ENCODE measurements at regions of chr2 and their contacts with region 1.

Region 1: DNA sequence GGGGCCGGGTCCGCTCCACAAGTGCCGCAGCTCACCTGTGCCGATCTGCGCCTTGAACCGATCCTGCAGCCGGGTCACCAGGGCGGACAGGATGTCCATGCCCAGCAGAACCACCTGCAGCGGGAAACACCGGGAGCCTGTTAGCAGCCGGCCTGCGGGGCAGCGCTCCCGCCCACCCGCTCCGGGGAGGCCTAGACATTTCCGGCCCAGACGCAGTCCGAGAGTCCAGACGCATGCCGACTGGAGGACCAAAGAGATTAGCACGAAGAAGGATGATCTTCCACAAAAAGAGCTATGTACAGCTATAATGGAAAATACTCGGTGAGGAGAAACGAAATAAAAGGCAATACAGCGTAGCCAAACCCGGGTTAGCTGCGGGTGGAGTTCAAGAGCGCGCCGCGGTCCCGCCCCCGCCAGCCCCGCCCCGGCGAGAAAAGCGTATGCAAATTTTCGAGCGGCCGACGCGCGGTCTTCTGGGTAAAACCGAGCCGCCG is 421 bp upstream of the RNU4ATAC start:
- DNase-seq: no peak
- ATAC-seq: peak; percentile 71
- H3K4me3 Mint-ChIP-seq: peak overlapping the region; percentile 82
- H3K27ac Mint-ChIP-seq: peak overlapping the region; percentile 96
- H3K4me1 Mint-ChIP-seq: peaks cover 54% of the 10 kb centered on the region
- H3K27me3 Mint-ChIP-seq: no peaks in the 10 kb centered on the region

Region 2: GRCh38 chr2:121505005-121505404 is 25.3 kb before region 1 on chr2:
- CTCF ChIA-PET with region 1: no interaction called
- DNase-seq: no peak
- ATAC-seq: no peak
- H3K4me3 Mint-ChIP-seq: no peak overlapping the region
- H3K27ac Mint-ChIP-seq: no peak overlapping the region
- H3K4me1 Mint-ChIP-seq: peaks cover 15% of the 10 kb centered on the region
- H3K27me3 Mint-ChIP-seq: no peaks in the 10 kb centered on the region

Region 3: GRCh38 chr2:121699421-121700333 is 169.4 kb after region 1 on chr2:
- CTCF ChIA-PET with region 1: interaction called, 26 read pairs
- DNase-seq: peak; percentile 98
- ATAC-seq: peak; percentile 94
- H3K4me3 Mint-ChIP-seq: peak overlapping the region; percentile 75
- H3K27ac Mint-ChIP-seq: peak overlapping the region; percentile 99
- H3K4me1 Mint-ChIP-seq: peaks cover 56% of the 10 kb centered on the region
- H3K27me3 Mint-ChIP-seq: no peaks in the 10 kb centered on the region

Region 4: GRCh38 chr2:121722479-121722878 is 192.2 kb after region 1 on chr2:
- CTCF ChIA-PET with region 1: interaction called, 15 read pairs
- DNase-seq: no peak
- ATAC-seq: peak; percentile 72
- H3K4me3 Mint-ChIP-seq: no peak overlapping the region
- H3K27ac Mint-ChIP-seq: peak overlapping the region; percentile 61
- H3K4me1 Mint-ChIP-seq: peaks cover 21% of the 10 kb centered on the region
- H3K27me3 Mint-ChIP-seq: no peaks in the 10 kb centered on the region

Measured in activated CD8-positive, alpha-beta memory T cell treated with anti-CD3 and anti-CD28 coated beads, Interleukin-2, amount 10 ng/mL, durations not matched to agents 7 days and 5 days (primary cell).